PC-3 (cell line): ENCODE measurements at regions of chr11 and their contacts with region 1.

Region 1: DNA sequence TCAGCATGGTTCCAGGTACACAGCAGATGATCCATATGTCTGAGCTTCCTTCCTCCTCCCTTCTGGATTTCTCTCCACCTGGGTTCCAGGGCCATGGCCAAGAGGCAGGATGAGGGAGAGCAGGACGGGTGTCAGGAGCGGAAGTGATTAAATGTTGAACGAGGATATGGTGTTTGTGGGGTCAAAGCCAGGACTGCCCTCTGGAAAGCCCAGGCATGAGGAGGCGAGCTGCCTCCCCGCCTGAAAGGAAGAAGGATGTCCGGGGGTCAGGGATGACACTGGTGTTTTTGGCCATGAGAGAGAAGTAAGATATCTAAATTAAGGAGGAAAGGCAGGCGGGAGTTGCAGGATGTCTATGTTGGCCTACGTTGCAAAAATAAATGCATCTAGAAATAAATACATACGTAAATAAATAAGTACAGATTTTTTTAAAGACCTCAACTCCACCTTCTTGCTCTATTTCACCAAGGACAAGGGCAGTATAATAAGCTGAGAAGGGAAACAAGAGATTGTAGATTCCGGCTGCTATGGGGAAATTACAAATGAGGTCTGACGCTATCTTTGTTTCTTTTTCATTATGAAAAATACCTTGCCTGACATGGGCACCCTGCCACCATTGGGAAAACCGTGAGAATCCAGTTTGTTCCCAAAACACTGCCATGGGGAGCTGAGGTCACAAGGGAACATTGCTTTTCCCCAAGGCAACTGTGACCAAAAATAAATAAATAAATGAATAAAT is 27.6 kb upstream of the LIPT2 start:
- DNase-seq: no peak
- ATAC-seq: no peak
- H3K4me3 ChIP-seq: no peak overlapping the region
- H3K27ac ChIP-seq: no peak overlapping the region
- H3K4me1 ChIP-seq: peaks cover 14% of the 10 kb centered on the region
- H3K27me3 ChIP-seq: no peaks in the 10 kb centered on the region
- CTCF ChIP-seq: no peak

Region 2: GRCh38 chr11:74504100-74504695 is 16.9 kb before region 1 on chr11:
- CTCF ChIA-PET with region 1: no interaction called
- POLR2A ChIA-PET with region 1: interaction called, 10 read pairs
- intact Hi-C with region 1: no loop called
- DNase-seq: no peak
- ATAC-seq: no peak
- H3K4me3 ChIP-seq: no peak overlapping the region
- H3K27ac ChIP-seq: peak overlapping the region; percentile 63
- H3K4me1 ChIP-seq: peaks cover 9% of the 10 kb centered on the region
- H3K27me3 ChIP-seq: no peaks in the 10 kb centered on the region
- CTCF ChIP-seq: 0 out of 2 replicates have a peak, but pooled peaks have one; percentile 17

Region 3: DNA sequence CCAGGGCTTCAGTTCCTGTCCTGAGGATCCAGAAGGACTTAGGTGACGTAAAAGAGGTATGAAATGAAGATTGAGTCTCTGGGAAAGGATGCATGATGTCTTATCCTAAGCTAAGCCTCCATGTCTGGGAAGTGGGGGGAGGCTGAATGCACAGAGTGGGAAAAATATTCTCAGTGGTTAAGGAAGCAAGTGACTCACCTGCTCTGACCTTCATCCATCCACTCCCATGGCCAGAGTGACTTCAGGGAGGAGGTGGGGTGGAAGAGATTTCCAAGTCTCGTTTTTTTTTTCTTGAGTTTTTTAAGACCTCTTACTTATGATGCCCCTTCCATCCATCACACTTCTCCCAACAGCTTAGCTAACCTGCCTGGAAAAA is 38.8 kb after region 1 on chr11:
- CTCF ChIA-PET with region 1: no interaction called
- POLR2A ChIA-PET with region 1: interaction called, 11 read pairs
- intact Hi-C with region 1: no loop called
- DNase-seq: peak; percentile 38
- ATAC-seq: peak; percentile 70
- H3K4me3 ChIP-seq: no peak overlapping the region
- H3K27ac ChIP-seq: peak overlapping the region; percentile 60
- H3K4me1 ChIP-seq: peaks cover 14% of the 10 kb centered on the region
- H3K27me3 ChIP-seq: no peaks in the 10 kb centered on the region
- CTCF ChIP-seq: no peak